Mammary epithelial cell (primary cell): ENCODE measurements at regions of chr3 and their contacts with region 1.

Region 1: DNA sequence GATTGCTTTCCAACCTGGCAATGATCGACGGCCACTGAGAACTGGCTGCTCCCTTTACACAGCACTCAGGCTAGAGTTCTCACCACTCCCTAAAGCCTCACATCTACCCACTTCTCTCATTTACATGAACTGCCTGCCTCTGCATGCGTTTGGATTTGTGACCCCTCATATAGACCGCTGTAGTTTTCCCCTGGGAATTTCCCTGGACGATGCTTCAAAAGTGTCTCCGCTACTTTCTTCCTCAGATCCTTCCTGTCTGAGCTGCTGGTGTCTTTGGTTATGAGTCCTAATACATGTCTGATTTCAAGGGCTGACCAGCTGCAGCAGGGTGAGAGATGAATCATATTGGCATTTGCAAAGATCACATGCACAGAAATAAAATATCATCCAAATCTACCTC is 116.7 kb upstream of the ETV5 start:
- DNase-seq: no peak
- H3K4me3 ChIP-seq: no peak overlapping the region
- H3K27ac ChIP-seq: no peak overlapping the region
- H3K4me1 ChIP-seq: no peaks in the 10 kb centered on the region
- H3K27me3 ChIP-seq: no peaks in the 10 kb centered on the region
- CTCF ChIP-seq: no peak

Region 2: DNA sequence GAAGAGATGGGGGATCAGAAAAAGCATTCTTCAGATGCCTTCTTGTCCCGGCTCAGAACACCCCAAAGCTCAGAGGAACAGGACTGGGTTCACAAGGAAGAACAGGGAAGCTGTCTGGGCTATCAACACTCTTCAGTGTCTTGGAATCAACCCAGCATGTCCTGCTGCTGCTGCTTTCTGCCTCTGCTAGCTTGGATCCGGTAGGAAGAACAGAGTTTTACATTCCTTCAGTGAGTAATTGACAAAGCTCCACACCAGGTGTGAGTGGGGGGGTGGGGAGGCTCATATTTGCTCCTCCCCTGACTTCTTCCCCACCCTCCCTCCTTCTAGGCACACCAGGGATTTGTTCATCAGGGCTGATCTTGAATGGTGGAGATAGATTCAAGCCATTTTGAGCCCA is 103.6 kb before region 1 on chr3:
- CTCF ChIA-PET with region 1: no interaction called
- dilution Hi-C with region 1: loop called (anchors 5 kb)
- in situ Hi-C with region 1: no loop called
- intact Hi-C with region 1: no loop called
- DNase-seq: peak; percentile 64
- H3K4me3 ChIP-seq: no peak overlapping the region
- H3K27ac ChIP-seq: no peak overlapping the region
- H3K4me1 ChIP-seq: peaks cover 9% of the 10 kb centered on the region
- H3K27me3 ChIP-seq: no peaks in the 10 kb centered on the region
- CTCF ChIP-seq: no peak